OCI-LY7 (cell line): ENCODE measurements at regions of chr3 and their contacts with region 1.

Region 1: GRCh38 chr3:184417619-184418327 is 37.9 kb downstream of the CHRD start:
- DNase-seq: peak; percentile 76
- H3K4me3 ChIP-seq: no peak overlapping the region
- H3K27ac ChIP-seq: no peak overlapping the region
- H3K4me1 ChIP-seq: no peaks in the 10 kb centered on the region
- CTCF ChIP-seq: peak; percentile 83

Region 2: DNA sequence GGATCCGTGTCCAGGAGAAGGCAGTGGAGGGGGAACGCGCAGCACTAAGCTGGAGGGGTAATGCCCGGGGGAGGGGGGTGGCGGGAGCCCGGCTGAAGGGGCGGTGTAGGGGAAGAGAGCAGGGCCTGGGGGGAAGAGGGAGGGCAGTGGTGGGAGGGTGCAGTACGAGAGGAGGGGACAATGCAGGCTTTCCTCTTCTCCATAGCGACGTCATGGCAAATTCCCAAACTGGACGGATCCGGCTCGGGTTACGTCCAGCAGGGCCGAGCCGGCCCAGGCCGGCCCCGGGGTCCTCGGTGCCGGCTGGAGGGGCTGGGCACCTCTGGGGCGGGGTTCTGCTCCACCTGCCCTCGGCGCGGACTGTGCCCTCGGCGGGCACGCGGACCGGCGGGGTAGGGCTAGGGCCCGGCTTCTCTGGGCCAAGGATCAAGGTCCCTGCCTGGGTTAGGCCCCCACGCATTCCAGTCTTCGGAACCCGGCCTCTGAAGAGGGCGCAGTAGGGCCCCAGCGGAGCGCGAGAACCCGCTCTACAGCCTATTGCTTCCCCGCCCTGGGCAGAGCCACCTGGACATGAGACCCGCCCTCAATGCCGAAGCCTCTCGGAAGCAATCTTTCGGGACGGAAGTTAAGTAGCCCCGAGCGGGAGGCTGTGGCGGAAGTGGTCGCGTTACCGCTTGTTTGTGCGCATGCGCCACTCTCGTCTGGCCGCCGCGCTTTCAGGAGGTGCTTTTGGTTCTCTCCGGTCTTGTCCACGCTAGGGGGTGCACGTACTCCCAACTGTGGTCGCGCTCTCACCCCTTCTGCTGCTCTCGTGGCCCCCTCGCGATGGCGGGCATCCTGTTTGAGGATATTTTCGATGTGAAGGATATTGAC is 54.9 kb before region 1 on chr3:
- CTCF ChIA-PET with region 1: no interaction called
- POLR2A ChIA-PET with region 1: no interaction called
- intact Hi-C with region 1: no loop called
- DNase-seq: peak; percentile 99
- H3K4me3 ChIP-seq: peak overlapping the region; percentile 97
- H3K27ac ChIP-seq: peak overlapping the region; percentile 55
- H3K4me1 ChIP-seq: peaks cover 23% of the 10 kb centered on the region
- CTCF ChIP-seq: peak; percentile 76

Region 3: GRCh38 chr3:184430940-184431339 is 13.2 kb after region 1 on chr3:
- CTCF ChIA-PET with region 1: no interaction called
- POLR2A ChIA-PET with region 1: no interaction called
- intact Hi-C with region 1: no loop called
- DNase-seq: no peak
- H3K4me3 ChIP-seq: no peak overlapping the region
- H3K27ac ChIP-seq: no peak overlapping the region
- H3K4me1 ChIP-seq: no peaks in the 10 kb centered on the region
- CTCF ChIP-seq: no peak

Region 4: DNA sequence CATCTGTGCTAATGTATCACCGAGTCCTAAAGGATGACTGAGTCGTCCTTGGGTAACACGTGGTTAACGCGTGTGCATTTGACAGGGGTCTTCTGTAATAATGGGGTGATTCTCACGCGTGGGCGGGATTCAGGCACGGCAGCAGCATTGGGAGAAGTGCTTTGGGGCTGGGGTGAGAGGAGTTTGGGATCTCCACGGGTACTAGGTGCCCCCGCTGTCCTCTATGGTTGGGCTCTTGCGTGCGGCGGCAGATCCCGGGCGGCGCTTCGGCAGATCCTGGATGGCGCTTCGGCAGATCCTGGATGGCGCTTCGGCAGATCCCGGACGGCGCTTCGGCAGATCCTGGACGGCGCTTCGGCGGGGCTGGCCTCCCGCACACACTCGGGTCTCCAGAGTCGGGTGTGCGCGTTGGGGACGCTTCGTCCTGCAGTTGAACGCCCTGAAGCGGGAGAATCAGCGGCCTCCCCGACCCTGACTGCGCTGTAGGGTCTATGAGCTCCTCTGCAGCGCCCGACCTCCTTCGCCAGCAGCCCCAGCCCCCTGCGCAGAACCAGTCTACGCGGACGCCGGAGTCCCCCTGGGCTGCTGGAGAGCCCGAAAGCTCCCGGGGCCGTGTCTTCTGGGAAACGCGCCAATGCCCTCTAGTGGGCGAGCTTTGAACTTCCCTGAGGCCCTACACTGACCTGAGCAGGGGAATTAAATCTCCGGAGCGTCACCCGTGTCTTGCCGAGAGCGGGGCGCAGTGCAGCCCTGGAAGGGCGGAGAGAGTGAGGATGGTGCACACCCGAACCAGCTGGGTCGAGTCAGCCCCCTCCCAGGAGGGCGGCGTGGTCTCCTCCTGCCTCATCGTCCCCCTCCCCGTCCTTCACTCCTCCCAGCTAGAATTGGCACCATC is 95.8 kb after region 1 on chr3:
- CTCF ChIA-PET with region 1: no interaction called
- POLR2A ChIA-PET with region 1: no interaction called
- intact Hi-C with region 1: loop called (anchors 1 kb)
- DNase-seq: peak; percentile 65
- H3K4me3 ChIP-seq: no peak overlapping the region
- H3K27ac ChIP-seq: no peak overlapping the region
- H3K4me1 ChIP-seq: no peaks in the 10 kb centered on the region
- CTCF ChIP-seq: peak; percentile 75

Region 5: GRCh38 chr3:184543843-184544512 is 126.2 kb after region 1 on chr3:
- CTCF ChIA-PET with region 1: no interaction called
- POLR2A ChIA-PET with region 1: no interaction called
- intact Hi-C with region 1: loop called (anchors 5 kb)
- DNase-seq: peak; percentile 73
- H3K4me3 ChIP-seq: no peak overlapping the region
- H3K27ac ChIP-seq: no peak overlapping the region
- H3K4me1 ChIP-seq: no peaks in the 10 kb centered on the region
- CTCF ChIP-seq: peak; percentile 85